ENCODE measurements at regions of chr5 and their contacts with region 1.

Region 1: GRCh38 chr5:81506900-81507588 is 113.1 kb upstream of the ACOT12 start:
- DNase-seq: peak; percentile 48
- H3K4me3 ChIP-seq: no peak overlapping the region
- H3K27ac ChIP-seq: peak overlapping the region in 3 of 4 donors; percentile 9 to 50 (median 38)
- H3K4me1 ChIP-seq: peaks cover 0 to 13% (median 2%) of the 10 kb centered on the region in 4 donors
- H3K27me3 ChIP-seq: no peaks in the 10 kb centered on the region
- CTCF ChIP-seq: peak; percentile 77 to 86 (median 81)
- EP300 ChIP-seq: no peak
- POLR2A ChIP-seq: no peak

Region 2: GRCh38 chr5:79837761-79838605 is 1669.1 kb before region 1 on chr5:
- in situ Hi-C with region 1: no loop called
- intact Hi-C with region 1: no loop called
- DNase-seq: no peak
- H3K4me3 ChIP-seq: no peak overlapping the region
- H3K27ac ChIP-seq: peak overlapping the region in 1 of 4 donors; percentile 31
- H3K4me1 ChIP-seq: peaks cover 0 to 10% (median 2%) of the 10 kb centered on the region in 4 donors
- H3K27me3 ChIP-seq: no peaks in the 10 kb centered on the region
- CTCF ChIP-seq: no peak
- EP300 ChIP-seq: no peak
- POLR2A ChIP-seq: no peak

Region 3: GRCh38 chr5:81052325-81052724 is 454.7 kb before region 1 on chr5:
- in situ Hi-C with region 1: no loop called
- intact Hi-C with region 1: no loop called
- DNase-seq: no peak
- H3K4me3 ChIP-seq: no peak overlapping the region
- H3K27ac ChIP-seq: no peak overlapping the region
- H3K4me1 ChIP-seq: no peaks in the 10 kb centered on the region
- H3K27me3 ChIP-seq: no peaks in the 10 kb centered on the region
- CTCF ChIP-seq: no peak
- EP300 ChIP-seq: no peak
- POLR2A ChIP-seq: no peak

Region 4: GRCh38 chr5:81838307-81838906 is 331.4 kb after region 1 on chr5:
- in situ Hi-C with region 1: loop called (anchors 10 to 25 kb)
- intact Hi-C with region 1: no loop called
- DNase-seq: peak; percentile 26
- H3K4me3 ChIP-seq: no peak overlapping the region
- H3K27ac ChIP-seq: no peak overlapping the region
- H3K4me1 ChIP-seq: no peaks in the 10 kb centered on the region
- H3K27me3 ChIP-seq: no peaks in the 10 kb centered on the region
- CTCF ChIP-seq: peak; percentile 32 to 48 (median 38)
- EP300 ChIP-seq: no peak
- POLR2A ChIP-seq: no peak

Measured in transverse colon (tissue), 4 donors.